Calu3 (cell line): ENCODE measurements at regions of chr17 and their contacts with region 1.

Region 1: DNA sequence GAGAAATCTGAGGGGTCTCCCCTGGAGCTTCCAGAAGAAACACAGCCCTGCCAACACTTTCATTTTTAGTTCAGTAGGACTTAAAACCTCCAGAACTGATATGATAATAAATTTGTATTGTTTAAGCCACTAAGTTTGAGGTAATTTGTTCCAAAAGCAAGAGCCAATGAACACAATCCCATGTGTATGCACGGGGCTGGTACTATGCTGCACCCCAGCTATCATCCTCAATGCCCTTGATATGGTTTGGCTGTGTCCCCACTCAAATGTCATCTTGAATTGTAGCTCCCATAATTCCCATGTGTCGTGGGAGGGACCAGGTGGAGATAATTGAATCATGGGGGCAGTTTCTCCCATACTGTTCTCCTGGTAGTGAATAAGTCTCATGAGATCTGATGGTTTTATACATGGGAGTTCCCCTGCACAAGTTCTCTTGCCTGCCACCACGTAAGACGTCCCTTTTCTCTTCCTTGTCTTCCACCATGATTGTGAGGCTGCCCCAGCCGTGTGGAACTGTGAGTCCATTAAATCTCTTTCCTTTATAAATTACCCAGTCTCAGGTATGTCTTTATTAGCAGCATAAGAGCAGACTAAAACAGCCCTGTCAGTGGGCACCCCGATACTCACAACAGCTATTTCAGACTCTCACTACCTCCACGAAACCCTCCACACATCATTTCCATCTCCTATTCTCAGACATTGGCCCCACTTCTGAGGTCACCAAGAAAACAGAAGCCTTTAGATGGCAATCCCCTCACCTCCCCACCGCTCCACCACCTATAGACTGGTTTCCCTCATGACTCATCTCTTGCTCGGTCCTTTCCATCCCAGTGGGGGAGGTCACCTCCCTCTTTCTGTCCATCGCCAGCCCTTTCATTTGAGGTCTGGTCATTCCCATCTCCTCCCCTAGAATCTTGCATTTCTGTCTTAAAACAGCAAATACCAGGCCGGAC is 8.9 kb upstream of the CACNG1 start:
- DNase-seq: no peak
- H3K4me3 Mint-ChIP-seq: no peak overlapping the region
- H3K27ac Mint-ChIP-seq: no peak overlapping the region
- H3K4me1 Mint-ChIP-seq: no peaks in the 10 kb centered on the region
- H3K27me3 Mint-ChIP-seq: peaks cover 45% of the 10 kb centered on the region
- CTCF ChIP-seq: no peak

Region 2: GRCh38 chr17:67095803-67096202 is 60.4 kb after region 1 on chr17:
- CTCF ChIA-PET with region 1: no interaction called
- intact Hi-C with region 1: loop called (anchors 2 kb)
- DNase-seq: no peak
- H3K4me3 Mint-ChIP-seq: no peak overlapping the region
- H3K27ac Mint-ChIP-seq: no peak overlapping the region
- H3K4me1 Mint-ChIP-seq: peaks cover 25% of the 10 kb centered on the region
- H3K27me3 Mint-ChIP-seq: no peaks in the 10 kb centered on the region
- CTCF ChIP-seq: no peak